Breast epithelium (tissue), 4 donors: ENCODE measurements at regions of chr4 and their contacts with region 1.

Region 1: GRCh38 chr4:95014068-95014467 is 256.3 kb downstream of the BMPR1B start:
- DNase-seq: no peak
- H3K4me3 ChIP-seq: no peak overlapping the region
- H3K27ac ChIP-seq: no peak overlapping the region
- H3K4me1 ChIP-seq: no peaks in the 10 kb centered on the region
- H3K27me3 ChIP-seq: no peaks in the 10 kb centered on the region
- CTCF ChIP-seq: no peak
- POLR2A ChIP-seq: no peak

Region 2: DNA sequence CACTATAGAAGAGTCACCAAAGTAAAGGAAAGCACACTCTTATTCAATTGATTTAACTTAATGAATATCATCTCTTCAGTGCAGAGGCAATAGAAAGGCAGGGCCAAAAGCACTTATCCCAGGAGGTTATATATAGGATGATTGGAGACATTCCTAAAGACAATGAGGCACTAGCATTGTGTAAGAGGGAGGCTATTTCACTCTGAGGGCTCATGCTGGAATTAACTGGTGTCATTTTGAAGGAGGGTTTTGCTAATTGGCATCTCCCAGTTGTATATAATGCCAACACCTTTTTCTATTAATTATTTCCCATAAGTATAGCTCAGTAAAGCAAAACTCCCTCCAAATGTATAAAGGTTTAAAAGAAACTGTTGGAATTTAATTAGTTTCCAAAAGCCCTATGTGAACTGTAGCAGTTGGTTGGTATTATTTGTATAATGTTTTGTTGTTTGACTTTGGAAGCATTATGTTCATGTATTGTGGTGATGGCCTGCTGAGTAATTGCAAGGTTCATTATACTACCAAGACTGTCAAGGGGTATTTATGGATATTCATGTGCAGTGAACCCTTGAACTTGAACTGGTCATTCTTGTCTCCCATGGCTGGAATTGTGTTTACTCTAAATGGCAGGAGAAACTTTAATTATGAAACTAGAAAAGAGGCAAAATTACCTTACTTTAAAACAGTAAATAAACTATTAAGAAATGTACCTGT is 14.0 kb after region 1 on chr4:
- intact Hi-C with region 1: loop called (anchors 2 kb)
- DNase-seq: no peak
- H3K4me3 ChIP-seq: no peak overlapping the region
- H3K27ac ChIP-seq: no peak overlapping the region
- H3K4me1 ChIP-seq: no peaks in the 10 kb centered on the region
- H3K27me3 ChIP-seq: no peaks in the 10 kb centered on the region
- CTCF ChIP-seq: no peak
- POLR2A ChIP-seq: no peak